CD4-positive, alpha-beta T cell (primary cell): ENCODE measurements at regions of chrX and their contacts with region 1.

Region 1: DNA sequence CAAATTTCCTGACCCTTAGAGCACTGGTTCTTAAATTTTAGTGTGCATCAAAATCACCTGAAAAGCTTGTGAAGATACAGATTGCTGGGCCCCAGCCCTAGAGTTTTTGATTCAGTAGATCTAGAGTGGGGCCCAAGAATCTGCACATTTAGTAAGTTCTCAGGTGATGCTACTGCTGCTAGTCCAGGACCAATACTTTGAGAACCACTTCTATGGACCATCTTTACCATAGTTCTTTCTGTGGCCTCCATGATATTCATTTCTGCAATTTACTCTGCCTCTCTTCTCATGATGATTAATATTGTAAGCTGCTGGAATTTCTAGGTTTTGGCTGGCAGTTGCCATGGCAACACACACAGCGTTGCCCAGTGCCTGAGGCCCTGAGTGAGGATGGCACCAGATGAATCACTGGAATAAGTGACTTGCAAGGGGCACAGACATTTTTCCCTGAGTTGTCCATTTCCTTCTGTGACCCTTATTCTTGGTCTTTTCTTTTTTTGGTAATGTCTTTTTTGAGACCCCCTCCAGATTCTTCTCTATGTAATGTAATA is 83.6 kb downstream of the PPP1R2C start:
- DNase-seq: no peak
- ATAC-seq: no peak
- H3K4me3 ChIP-seq: no peak overlapping the region
- H3K4me3 Mint-ChIP-seq: no peak overlapping the region
- H3K27ac ChIP-seq: no peak overlapping the region
- H3K27ac Mint-ChIP-seq: no peak overlapping the region
- H3K4me1 ChIP-seq: no peaks in the 10 kb centered on the region
- H3K4me1 Mint-ChIP-seq: no peaks in the 10 kb centered on the region
- H3K27me3 ChIP-seq: no peaks in the 10 kb centered on the region
- H3K27me3 Mint-ChIP-seq: no peaks in the 10 kb centered on the region
- CTCF ChIP-seq: no peak

Region 2: GRCh38 chrX:42269182-42269581 is 425.2 kb before region 1 on chrX:
- CTCF ChIA-PET with region 1: no interaction called
- POLR2A ChIA-PET with region 1: no interaction called
- intact Hi-C with region 1: no loop called
- DNase-seq: no peak
- ATAC-seq: no peak
- H3K4me3 ChIP-seq: no peak overlapping the region
- H3K4me3 Mint-ChIP-seq: no peak overlapping the region
- H3K27ac ChIP-seq: no peak overlapping the region
- H3K27ac Mint-ChIP-seq: no peak overlapping the region
- H3K4me1 ChIP-seq: no peaks in the 10 kb centered on the region
- H3K4me1 Mint-ChIP-seq: no peaks in the 10 kb centered on the region
- H3K27me3 ChIP-seq: no peaks in the 10 kb centered on the region
- H3K27me3 Mint-ChIP-seq: no peaks in the 10 kb centered on the region
- CTCF ChIP-seq: no peak

Region 3: GRCh38 chrX:42627891-42628290 is 66.4 kb before region 1 on chrX:
- CTCF ChIA-PET with region 1: no interaction called
- POLR2A ChIA-PET with region 1: no interaction called
- intact Hi-C with region 1: loop called in 1 of 2 experiments (anchors 10 kb)
- DNase-seq: no peak
- ATAC-seq: no peak
- H3K4me3 ChIP-seq: no peak overlapping the region
- H3K4me3 Mint-ChIP-seq: no peak overlapping the region
- H3K27ac ChIP-seq: no peak overlapping the region
- H3K27ac Mint-ChIP-seq: no peak overlapping the region
- H3K4me1 ChIP-seq: no peaks in the 10 kb centered on the region
- H3K4me1 Mint-ChIP-seq: no peaks in the 10 kb centered on the region
- H3K27me3 ChIP-seq: no peaks in the 10 kb centered on the region
- H3K27me3 Mint-ChIP-seq: no peaks in the 10 kb centered on the region
- CTCF ChIP-seq: no peak

Region 4: DNA sequence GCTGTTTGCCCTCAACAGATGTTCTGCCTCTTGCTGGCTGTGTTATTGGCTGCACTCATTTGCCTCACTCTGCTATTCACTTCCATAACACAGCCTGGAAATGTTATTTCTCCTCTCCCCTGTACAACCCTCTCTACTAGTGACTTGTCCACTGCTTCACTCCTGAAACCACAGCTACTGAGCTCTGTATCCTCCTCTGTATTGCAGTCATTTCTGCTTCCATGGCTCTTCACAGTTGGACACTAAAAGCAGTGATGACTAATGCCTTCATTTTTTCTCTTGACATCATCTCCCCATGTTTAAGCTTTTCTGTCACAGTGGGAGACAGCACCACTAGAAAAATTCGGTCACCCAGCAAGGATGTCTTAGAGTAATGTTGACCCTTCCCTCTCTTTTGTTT is 206.6 kb after region 1 on chrX:
- CTCF ChIA-PET with region 1: no interaction called
- POLR2A ChIA-PET with region 1: no interaction called
- intact Hi-C with region 1: no loop called
- DNase-seq: no peak
- ATAC-seq: no peak
- H3K4me3 ChIP-seq: no peak overlapping the region
- H3K4me3 Mint-ChIP-seq: no peak overlapping the region
- H3K27ac ChIP-seq: no peak overlapping the region
- H3K27ac Mint-ChIP-seq: no peak overlapping the region
- H3K4me1 ChIP-seq: no peaks in the 10 kb centered on the region
- H3K4me1 Mint-ChIP-seq: no peaks in the 10 kb centered on the region
- H3K27me3 ChIP-seq: no peaks in the 10 kb centered on the region
- H3K27me3 Mint-ChIP-seq: no peaks in the 10 kb centered on the region
- CTCF ChIP-seq: no peak